ENCODE measurements at regions of chr4 and their contacts with region 1.

Region 1: DNA sequence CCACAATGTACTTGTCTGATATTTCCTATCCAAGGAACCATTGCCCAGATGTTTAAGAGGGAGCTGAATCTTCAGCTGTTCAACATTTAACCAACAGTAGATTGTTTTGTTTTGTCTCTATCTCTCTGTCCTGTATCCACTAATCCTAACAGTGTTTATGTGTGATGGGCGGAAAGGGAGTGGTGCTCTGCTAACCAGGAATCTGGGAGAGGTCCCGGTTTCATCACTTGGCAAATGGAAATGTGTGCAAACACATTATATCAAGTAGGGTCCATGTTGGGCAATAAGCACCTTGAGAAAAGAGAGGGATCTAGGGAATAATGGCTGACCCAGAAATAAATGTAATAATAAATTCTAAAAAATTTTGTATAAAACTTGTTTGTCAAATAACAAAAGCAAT is 56.0 kb downstream of the EMCN start:
- DNase-seq: no peak
- ATAC-seq: no peak
- H3K4me3 ChIP-seq: no peak overlapping the region
- H3K27ac ChIP-seq: no peak overlapping the region
- H3K4me1 ChIP-seq: peaks cover 0 to 5% (median 0%) of the 10 kb centered on the region in 12 donors
- H3K27me3 ChIP-seq: no peaks in the 10 kb centered on the region
- CTCF ChIP-seq: no peak
- POLR2A ChIP-seq: no peak

Region 2: DNA sequence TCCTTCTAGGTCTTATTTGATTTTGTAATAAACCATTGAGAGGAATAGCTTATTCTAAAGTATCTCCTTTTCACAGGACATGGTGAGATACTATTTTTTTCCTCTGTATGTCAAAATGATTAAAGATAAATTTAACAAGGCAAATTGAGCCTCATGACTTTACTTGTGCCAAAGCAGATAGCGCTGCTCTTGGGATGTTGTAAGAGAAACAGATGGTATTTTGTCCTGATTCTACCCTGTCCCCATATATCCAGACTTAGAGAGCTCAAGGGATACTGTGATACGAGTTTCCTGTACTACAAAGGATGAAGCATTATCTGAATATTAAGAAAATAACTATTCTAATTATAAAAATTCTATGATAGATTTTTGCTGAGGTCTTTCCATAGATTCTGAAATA is 22.0 kb after region 1 on chr4:
- intact Hi-C with region 1: loop called in 1 of 10 experiments (anchors 2 kb)
- DNase-seq: no peak
- ATAC-seq: no peak
- H3K4me3 ChIP-seq: no peak overlapping the region
- H3K27ac ChIP-seq: no peak overlapping the region
- H3K4me1 ChIP-seq: peaks cover 0 to 11% (median 0%) of the 10 kb centered on the region in 12 donors
- H3K27me3 ChIP-seq: no peaks in the 10 kb centered on the region
- CTCF ChIP-seq: no peak
- POLR2A ChIP-seq: no peak

Region 3: GRCh38 chr4:100539706-100540105 is 77.9 kb after region 1 on chr4:
- intact Hi-C with region 1: no loop called
- DNase-seq: no peak
- ATAC-seq: peak in 2 of 4 donors; percentile 56 to 62
- H3K4me3 ChIP-seq: no peak overlapping the region
- H3K27ac ChIP-seq: no peak overlapping the region
- H3K4me1 ChIP-seq: peaks cover 0 to 4% (median 0%) of the 10 kb centered on the region in 12 donors
- H3K27me3 ChIP-seq: no peaks in the 10 kb centered on the region
- CTCF ChIP-seq: no peak
- POLR2A ChIP-seq: no peak

Measured in heart left ventricle (tissue), 16 donors.